ENCODE measurements at regions of chr4 and their contacts with region 1.

Region 1: DNA sequence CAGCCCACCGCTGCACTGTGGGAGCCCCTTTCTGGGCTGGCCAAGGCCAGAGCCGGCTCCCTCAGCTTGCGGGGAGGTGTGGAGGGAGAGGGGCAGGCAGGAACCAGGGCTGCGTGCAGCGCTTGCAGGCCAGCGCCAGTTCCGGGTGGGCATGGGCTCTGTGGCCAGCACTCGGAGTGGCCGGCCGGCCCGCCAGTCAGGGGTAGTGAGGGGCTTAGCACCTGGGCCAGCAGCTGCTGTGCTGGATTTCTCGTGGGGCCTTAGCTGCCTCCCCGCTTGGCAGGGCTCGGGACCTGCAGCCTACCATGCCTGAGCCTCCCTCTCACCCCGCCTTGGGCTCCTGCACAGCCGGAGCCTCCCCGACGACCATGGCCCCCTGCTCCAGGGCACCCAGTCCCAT is 45.2 kb downstream of the RXFP1 start:
- DNase-seq: no peak
- H3K4me3 ChIP-seq: no peak overlapping the region
- H3K27ac ChIP-seq: no peak overlapping the region
- H3K4me1 ChIP-seq: no peaks in the 10 kb centered on the region
- H3K27me3 ChIP-seq: no peaks in the 10 kb centered on the region
- CTCF ChIP-seq: no peak
- POLR2A ChIP-seq: no peak

Region 2: GRCh38 chr4:159175085-159175988 is 608.5 kb after region 1 on chr4:
- intact Hi-C with region 1: loop called (anchors 5 kb)
- DNase-seq: peak in 1 of 2 donors; percentile 61
- H3K4me3 ChIP-seq: peak overlapping the region in 1 of 3 donors; percentile 36
- H3K27ac ChIP-seq: peak overlapping the region; percentile 8 to 45
- H3K4me1 ChIP-seq: peaks cover 0 to 9% of the 10 kb centered on the region in 2 donors
- H3K27me3 ChIP-seq: no peaks in the 10 kb centered on the region
- CTCF ChIP-seq: peak; percentile 73 to 89 (median 85)
- POLR2A ChIP-seq: no peak

Measured in breast epithelium (tissue), 4 donors.